H1 (cell line): ENCODE measurements at regions of chr1 and their contacts with region 1.

Region 1: DNA sequence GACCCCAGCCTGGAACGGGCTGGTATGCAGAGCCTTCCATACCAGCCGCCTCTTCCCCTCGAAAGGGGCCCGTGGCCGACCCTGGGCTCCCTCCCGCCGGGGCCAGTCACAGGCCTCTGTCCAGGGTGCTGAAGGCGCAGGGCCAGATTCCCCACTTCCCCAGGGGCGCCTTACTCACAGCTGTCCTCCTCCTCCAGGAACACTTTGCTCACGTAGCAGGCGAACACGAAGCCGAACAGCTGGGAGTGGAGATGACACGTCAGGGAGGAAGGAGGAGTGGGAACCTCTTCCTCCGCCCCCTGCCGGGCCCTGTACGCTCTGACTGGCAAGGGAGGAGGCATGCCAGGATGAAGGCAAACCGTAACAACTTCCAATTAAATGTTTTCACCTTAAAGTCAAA is 57.3 kb downstream of the NKAIN1 start:
- DNase-seq: peak in 1 of 2 experiments; percentile 95
- H3K4me3 ChIP-seq: peak overlapping the region in 1 of 4 experiments; percentile 44; a peak in 2 of 8 replicates
- H3K27ac ChIP-seq: no peak overlapping the region
- H3K4me1 ChIP-seq: no peaks in the 10 kb centered on the region
- H3K27me3 ChIP-seq: no peaks in the 10 kb centered on the region
- CTCF ChIP-seq: no peak
- EP300 ChIP-seq: no peak
- POLR2A ChIP-seq: no peak
- RAD21 ChIP-seq: no peak; a peak in 1 of 4 replicates

Region 2: DNA sequence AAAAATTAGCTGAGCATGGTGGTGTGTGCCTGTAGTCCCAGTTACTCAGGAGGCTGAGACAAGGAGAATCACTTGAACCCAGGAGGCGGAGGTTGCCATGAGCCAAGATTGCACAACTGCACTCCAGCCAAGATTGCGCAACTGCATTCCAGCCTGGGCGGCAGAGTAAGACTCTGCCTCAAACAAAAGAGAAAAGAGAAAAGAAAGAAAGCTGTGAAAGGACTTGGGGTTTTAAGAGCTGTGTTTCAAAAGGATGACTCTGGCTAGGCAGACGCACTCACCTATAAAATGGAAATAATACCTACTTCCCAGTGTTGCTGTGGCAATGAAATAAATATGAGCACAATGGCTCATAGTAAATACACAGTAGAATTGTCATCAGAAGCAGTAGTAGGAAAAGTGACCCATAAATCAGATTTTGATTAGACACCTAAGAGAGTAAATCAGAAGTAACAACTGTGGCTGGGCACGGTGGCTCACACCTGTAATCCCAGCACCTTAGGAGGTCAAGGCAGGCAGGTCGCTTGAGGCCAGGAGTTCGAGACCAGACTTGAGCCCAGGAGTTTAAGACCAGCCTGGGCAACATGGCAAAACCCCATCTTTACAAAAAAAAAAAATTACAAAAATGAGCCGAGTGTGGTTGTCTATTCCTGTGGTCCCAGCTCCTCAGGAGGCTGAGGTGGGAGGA is 70.9 kb before region 1 on chr1:
- CTCF ChIA-PET with region 1: no interaction called
- POLR2A ChIA-PET with region 1: no interaction called
- DNase-seq: peak in 1 of 2 experiments; percentile 55
- H3K4me3 ChIP-seq: no peak overlapping the region
- H3K27ac ChIP-seq: no peak overlapping the region
- H3K4me1 ChIP-seq: peaks cover 0 to 3% (median 0%) of the 10 kb centered on the region in 4 experiments; a peak in 2 of 7 replicates
- H3K27me3 ChIP-seq: no peaks in the 10 kb centered on the region
- CTCF ChIP-seq: no peak
- EP300 ChIP-seq: no peak
- POLR2A ChIP-seq: no peak
- RAD21 ChIP-seq: no peak

Region 3: GRCh38 chr1:31196685-31197084 is 14.3 kb after region 1 on chr1:
- CTCF ChIA-PET with region 1: interaction called, 59 read pairs
- POLR2A ChIA-PET with region 1: no interaction called
- DNase-seq: no peak
- H3K4me3 ChIP-seq: no peak overlapping the region
- H3K27ac ChIP-seq: no peak overlapping the region
- H3K4me1 ChIP-seq: peaks cover 0 to 7% (median under 1%) of the 10 kb centered on the region in 4 experiments; a peak in 4 of 7 replicates
- H3K27me3 ChIP-seq: no peaks in the 10 kb centered on the region
- CTCF ChIP-seq: no peak
- EP300 ChIP-seq: no peak
- POLR2A ChIP-seq: no peak
- RAD21 ChIP-seq: no peak

Region 4: GRCh38 chr1:31222176-31222575 is 39.8 kb after region 1 on chr1:
- CTCF ChIA-PET with region 1: interaction called, 146 read pairs
- POLR2A ChIA-PET with region 1: no interaction called
- DNase-seq: no peak
- H3K4me3 ChIP-seq: no peak overlapping the region
- H3K27ac ChIP-seq: no peak overlapping the region
- H3K4me1 ChIP-seq: peaks cover 0 to 2% (median 0%) of the 10 kb centered on the region in 4 experiments; a peak in 3 of 7 replicates
- H3K27me3 ChIP-seq: no peaks in the 10 kb centered on the region
- CTCF ChIP-seq: no peak
- EP300 ChIP-seq: no peak
- POLR2A ChIP-seq: no peak
- RAD21 ChIP-seq: no peak

Region 5: GRCh38 chr1:31248293-31248692 is 65.9 kb after region 1 on chr1:
- CTCF ChIA-PET with region 1: interaction called, 49 read pairs
- POLR2A ChIA-PET with region 1: interaction called, 3 read pairs
- DNase-seq: no peak
- H3K4me3 ChIP-seq: no peak overlapping the region
- H3K27ac ChIP-seq: no peak overlapping the region
- H3K4me1 ChIP-seq: no peaks in the 10 kb centered on the region
- H3K27me3 ChIP-seq: no peaks in the 10 kb centered on the region
- CTCF ChIP-seq: no peak
- EP300 ChIP-seq: no peak
- POLR2A ChIP-seq: no peak
- RAD21 ChIP-seq: no peak

Region 6: DNA sequence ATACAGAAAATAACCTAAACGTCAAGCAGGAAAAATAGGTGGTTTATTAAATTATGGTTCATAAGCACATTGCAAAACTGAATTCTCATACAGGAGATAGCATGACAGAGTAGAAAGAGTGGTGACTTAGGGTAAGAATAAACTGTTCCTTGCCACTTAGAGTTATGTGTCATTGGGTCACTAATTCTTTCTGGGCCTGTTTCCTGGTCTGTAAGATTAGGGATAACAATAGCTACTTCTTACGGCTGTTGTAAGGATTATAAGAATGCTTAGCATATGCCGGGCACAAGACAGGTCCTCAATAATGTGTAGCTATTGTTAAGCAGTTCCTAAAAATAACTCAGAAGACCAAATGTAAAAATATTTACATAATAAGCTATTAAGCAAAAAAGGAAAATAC is 90.0 kb after region 1 on chr1:
- CTCF ChIA-PET with region 1: interaction called, 113 read pairs
- POLR2A ChIA-PET with region 1: no interaction called
- DNase-seq: no peak
- H3K4me3 ChIP-seq: no peak overlapping the region
- H3K27ac ChIP-seq: no peak overlapping the region
- H3K4me1 ChIP-seq: no peaks in the 10 kb centered on the region
- H3K27me3 ChIP-seq: no peaks in the 10 kb centered on the region
- CTCF ChIP-seq: no peak
- EP300 ChIP-seq: no peak
- POLR2A ChIP-seq: no peak
- RAD21 ChIP-seq: no peak

Region 7: DNA sequence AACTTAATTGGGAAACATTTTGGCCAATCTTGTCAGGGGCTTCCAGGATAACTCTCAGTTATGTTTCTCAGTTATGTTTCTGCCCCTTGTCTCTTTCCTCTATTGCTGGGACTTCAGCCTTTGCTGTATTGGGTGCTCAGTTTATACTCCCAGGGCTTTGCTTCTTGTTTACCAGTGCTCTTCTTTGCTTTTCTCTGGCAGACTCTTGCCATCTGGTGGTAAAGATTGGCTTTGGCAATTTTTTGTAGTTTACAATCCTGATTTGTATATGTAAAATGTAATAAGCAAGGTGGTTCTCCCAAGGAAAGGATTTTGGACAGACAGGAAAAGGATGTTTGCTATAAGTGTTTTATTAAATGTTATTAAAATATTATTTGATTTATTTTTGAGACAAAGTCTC is 152.7 kb after region 1 on chr1:
- CTCF ChIA-PET with region 1: interaction called, 24 read pairs
- POLR2A ChIA-PET with region 1: interaction called, 3 read pairs
- DNase-seq: no peak
- H3K4me3 ChIP-seq: no peak overlapping the region
- H3K27ac ChIP-seq: no peak overlapping the region
- H3K4me1 ChIP-seq: no peaks in the 10 kb centered on the region
- H3K27me3 ChIP-seq: no peaks in the 10 kb centered on the region
- CTCF ChIP-seq: peak in 2 of 3 experiments; percentile 44 to 51; a peak in 3 of 4 replicates
- EP300 ChIP-seq: no peak
- POLR2A ChIP-seq: no peak
- RAD21 ChIP-seq: peak; percentile 62 to 69